HepG2 (cell line): ENCODE measurements at regions of chr3 and their contacts with region 1.

Region 1: GRCh38 chr3:44510000-44510368 is 32.5 kb upstream of the ZNF445 start:
- DNase-seq: no peak
- ATAC-seq: no peak; the same call in 2 of the 3 replicates
- H3K4me3 ChIP-seq: peak overlapping the region; percentile 73 to 99 (median 86)
- H3K27ac ChIP-seq: peak overlapping the region; percentile 73
- H3K4me1 ChIP-seq: peaks cover 59% of the 10 kb centered on the region
- H3K27me3 ChIP-seq: no peaks in the 10 kb centered on the region; a peak in 1 of 5 replicates
- CTCF ChIP-seq: no peak
- EP300 ChIP-seq: no peak
- POLR2A ChIP-seq: peak in 1 of 2 experiments; percentile 28; a peak in 1 of 4 replicates
- RAD21 ChIP-seq: no peak

Region 2: GRCh38 chr3:43649365-43649968 is 860.5 kb before region 1 on chr3:
- CTCF ChIA-PET with region 1: no interaction called
- POLR2A ChIA-PET with region 1: no interaction called
- in situ Hi-C with region 1: no loop called
- intact Hi-C with region 1: no loop called
- DNase-seq: no peak
- ATAC-seq: peak; percentile 66
- H3K4me3 ChIP-seq: peak overlapping the region; percentile 18 to 61 (median 21); a peak in 3 of 6 replicates
- H3K27ac ChIP-seq: no peak overlapping the region
- H3K4me1 ChIP-seq: peaks cover 14% of the 10 kb centered on the region; the same call in 1 of the 2 replicates
- H3K27me3 ChIP-seq: no peaks in the 10 kb centered on the region
- CTCF ChIP-seq: no peak
- EP300 ChIP-seq: no peak
- POLR2A ChIP-seq: no peak
- RAD21 ChIP-seq: no peak

Region 3: GRCh38 chr3:44323341-44323955 is 186.5 kb before region 1 on chr3:
- CTCF ChIA-PET with region 1: no interaction called
- POLR2A ChIA-PET with region 1: no interaction called
- in situ Hi-C with region 1: no loop called
- intact Hi-C with region 1: loop called (anchors 5 kb)
- DNase-seq: peak; percentile 55
- ATAC-seq: no peak
- H3K4me3 ChIP-seq: no peak overlapping the region
- H3K27ac ChIP-seq: no peak overlapping the region
- H3K4me1 ChIP-seq: peaks cover 22% of the 10 kb centered on the region
- H3K27me3 ChIP-seq: no peaks in the 10 kb centered on the region; a peak in 1 of 5 replicates
- CTCF ChIP-seq: peak; percentile 83
- EP300 ChIP-seq: no peak
- POLR2A ChIP-seq: no peak
- RAD21 ChIP-seq: peak; percentile 71; the same call in 1 of the 2 replicates

Region 4: DNA sequence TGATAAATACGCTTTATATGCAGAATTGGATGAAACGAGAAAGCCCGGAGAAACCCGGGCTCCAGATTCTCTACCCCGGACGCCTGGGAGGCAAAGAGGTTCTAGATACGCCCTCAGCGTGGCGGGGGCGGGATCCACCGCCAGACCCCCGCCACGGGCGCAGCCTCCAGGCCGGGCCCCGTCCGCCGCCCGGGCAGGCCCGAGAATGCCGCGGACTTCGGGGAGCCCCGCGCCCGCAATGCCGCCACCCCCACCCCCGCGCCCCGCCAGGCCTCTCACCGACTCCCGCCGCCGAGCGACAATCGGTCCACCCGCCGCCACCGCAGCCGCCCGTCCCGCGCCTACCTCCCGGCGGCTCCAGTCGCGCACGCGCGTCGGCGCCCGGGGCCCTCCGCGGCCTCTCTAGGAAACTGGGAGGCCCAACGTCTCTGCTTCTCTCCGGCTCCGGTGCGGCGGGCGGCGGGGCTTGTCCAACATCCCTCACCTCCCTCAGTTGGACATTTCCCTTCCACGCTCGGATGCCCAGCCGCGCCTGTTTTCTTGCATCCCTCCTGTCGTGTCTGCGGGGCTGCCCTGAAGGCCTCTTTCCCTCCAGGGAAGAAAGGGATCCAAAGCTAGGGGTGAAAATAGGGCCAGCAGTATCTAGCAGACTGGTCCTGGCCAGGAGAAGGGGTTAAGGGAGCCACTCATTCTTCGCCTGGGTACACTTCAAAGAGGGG is 32.5 kb before region 1 on chr3 and contains the start of gene ZNF445:
- CTCF ChIA-PET with region 1: no interaction called
- POLR2A ChIA-PET with region 1: interaction called, 36 read pairs
- in situ Hi-C with region 1: no loop called
- intact Hi-C with region 1: loop called (anchors 1 kb)
- DNase-seq: peak; percentile 67
- ATAC-seq: peak; percentile 85
- H3K4me3 ChIP-seq: peak within 1 kb of the TSS; percentile 81 to 92 (median 87)
- H3K27ac ChIP-seq: peak within 1 kb of the TSS; percentile 88
- H3K4me1 ChIP-seq: peaks cover 56% of the 10 kb centered on the region
- H3K27me3 ChIP-seq: no peaks in the 10 kb centered on the region; a peak in 1 of 5 replicates
- CTCF ChIP-seq: no peak; the same call in 1 of the 2 replicates
- EP300 ChIP-seq: no peak
- POLR2A ChIP-seq: peak; percentile 26 to 60; a peak in 2 of 4 replicates
- RAD21 ChIP-seq: no peak
- total RNA-seq, gene ZNF445: 10.3 and 11.8 TPM in 2 replicates

Region 5: DNA sequence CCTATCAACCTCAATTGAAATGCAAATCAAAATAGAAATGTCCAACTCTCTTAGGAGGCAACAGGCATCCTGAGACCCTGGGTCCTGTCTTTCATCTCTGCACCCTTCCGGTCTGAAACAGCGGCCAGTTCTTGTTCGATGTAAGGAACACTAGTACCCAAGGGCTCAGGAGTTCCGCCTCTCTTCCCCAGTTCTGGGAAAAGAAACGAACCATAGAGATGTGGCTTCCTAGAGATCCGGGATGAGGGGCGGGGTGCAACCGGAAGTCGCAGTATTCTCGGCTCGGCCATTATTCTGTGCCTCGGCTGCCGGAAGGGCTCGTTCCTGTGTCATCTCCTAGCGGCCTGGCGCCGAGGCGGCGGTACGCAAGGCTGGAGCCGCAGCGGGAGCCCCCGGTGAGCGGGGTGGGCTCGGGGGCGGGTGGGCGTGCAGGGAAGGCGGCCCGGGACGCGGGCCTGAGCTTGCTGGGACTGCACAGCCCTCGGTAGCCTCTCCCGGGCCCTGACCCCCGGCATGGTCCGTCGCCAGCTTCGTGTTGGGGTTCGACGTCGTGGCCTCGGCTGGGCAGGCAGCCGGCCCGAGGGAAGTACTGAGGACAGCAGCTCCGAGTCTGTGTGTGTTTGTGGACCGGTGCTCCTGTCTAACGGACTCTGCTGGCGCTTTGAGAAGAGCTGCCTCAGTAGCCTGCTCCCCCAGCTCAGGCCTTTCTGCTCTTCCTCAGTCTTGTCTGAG is 114.9 kb after region 1 on chr3 and contains the start of gene ZNF197:
- CTCF ChIA-PET with region 1: no interaction called
- POLR2A ChIA-PET with region 1: interaction called, 12 read pairs
- in situ Hi-C with region 1: no loop called
- intact Hi-C with region 1: no loop called
- DNase-seq: peak; percentile 57
- ATAC-seq: peak; percentile 96
- H3K4me3 ChIP-seq: peak within 1 kb of the TSS; percentile 58 to 75 (median 68); a peak in 5 of 6 replicates
- H3K27ac ChIP-seq: peak within 1 kb of the TSS; percentile 61
- H3K4me1 ChIP-seq: peaks cover 6% of the 10 kb centered on the region
- H3K27me3 ChIP-seq: no peaks in the 10 kb centered on the region
- CTCF ChIP-seq: peak; percentile 29; the same call in 1 of the 2 replicates
- EP300 ChIP-seq: no peak
- POLR2A ChIP-seq: peak in 1 of 2 experiments; percentile 60; a peak in 1 of 4 replicates
- RAD21 ChIP-seq: no peak
- total RNA-seq, gene ZNF197: 6.8 and 9.9 TPM in 2 replicates